ENCODE measurements at regions of chr15 and their contacts with region 1.

Region 1: GRCh38 chr15:90954712-90955671 is at the start of gene RCCD1:
- DNase-seq: peak; percentile 93
- ATAC-seq: peak; percentile 75
- H3K4me3 Mint-ChIP-seq: peak within 1 kb of the TSS; percentile 74
- H3K27ac Mint-ChIP-seq: peak within 1 kb of the TSS; percentile 76
- H3K4me1 Mint-ChIP-seq: peaks cover 16% of the 10 kb centered on the region
- H3K27me3 Mint-ChIP-seq: no peaks in the 10 kb centered on the region
- CTCF ChIP-seq: no peak
- total RNA-seq, gene RCCD1: 26.1 to 31.9 TPM (median 27.8 TPM) in 3 replicates

Region 2: GRCh38 chr15:90680371-90680935 is 274.5 kb before region 1 on chr15:
- CTCF ChIA-PET with region 1: no interaction called
- POLR2A ChIA-PET with region 1: no interaction called
- DNase-seq: no peak
- ATAC-seq: no peak
- H3K4me3 Mint-ChIP-seq: no peak overlapping the region
- H3K27ac Mint-ChIP-seq: no peak overlapping the region
- H3K4me1 Mint-ChIP-seq: 0 out of 2 replicates have a peak, but pooled peaks cover 3% of the 10 kb centered on the region
- H3K27me3 Mint-ChIP-seq: no peaks in the 10 kb centered on the region
- CTCF ChIP-seq: no peak

Region 3: GRCh38 chr15:90902040-90902839 is 52.8 kb before region 1 on chr15:
- CTCF ChIA-PET with region 1: interaction called, 49 read pairs
- POLR2A ChIA-PET with region 1: interaction called, 4 read pairs
- DNase-seq: peak; percentile 78
- ATAC-seq: peak; percentile 77
- H3K4me3 Mint-ChIP-seq: peak overlapping the region; percentile 70
- H3K27ac Mint-ChIP-seq: peak overlapping the region; percentile 41; the same call in 1 of the 2 replicates
- H3K4me1 Mint-ChIP-seq: peaks cover 23% of the 10 kb centered on the region
- H3K27me3 Mint-ChIP-seq: peaks cover 26% of the 10 kb centered on the region
- CTCF ChIP-seq: no peak

Region 4: DNA sequence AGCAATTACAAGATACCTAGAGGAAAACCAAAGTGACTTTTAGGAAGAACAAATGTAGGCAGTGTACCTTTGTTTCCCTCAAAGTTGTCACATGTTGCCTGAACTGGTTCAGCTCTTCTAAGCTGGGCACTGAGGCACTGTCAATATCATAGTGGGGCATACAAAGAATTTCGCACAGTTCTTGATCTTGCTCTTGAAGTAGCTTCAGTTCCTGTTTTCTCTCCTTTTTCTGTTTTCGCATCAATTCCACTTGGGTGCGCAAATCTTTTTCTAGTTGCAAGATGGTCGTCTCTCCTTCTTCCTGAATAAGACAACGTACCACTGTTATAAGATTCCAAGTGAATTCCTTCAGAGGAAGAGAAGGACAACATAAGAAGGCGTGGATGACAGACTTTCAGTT is 26.7 kb after region 1 on chr15:
- CTCF ChIA-PET with region 1: interaction called, 26 read pairs
- POLR2A ChIA-PET with region 1: interaction called, 3 read pairs
- DNase-seq: no peak
- ATAC-seq: no peak
- H3K4me3 Mint-ChIP-seq: no peak overlapping the region
- H3K27ac Mint-ChIP-seq: no peak overlapping the region
- H3K4me1 Mint-ChIP-seq: no peaks in the 10 kb centered on the region
- H3K27me3 Mint-ChIP-seq: no peaks in the 10 kb centered on the region
- CTCF ChIP-seq: no peak

Region 5: GRCh38 chr15:90994417-90995311 is 39.7 kb after region 1 on chr15 and contains the start of gene PRC1:
- CTCF ChIA-PET with region 1: interaction called, 31 read pairs
- POLR2A ChIA-PET with region 1: interaction called, 4 read pairs
- DNase-seq: peak; percentile 99
- ATAC-seq: peak; percentile 97
- H3K4me3 Mint-ChIP-seq: peak within 1 kb of the TSS; percentile 99
- H3K27ac Mint-ChIP-seq: peak within 1 kb of the TSS; percentile 99
- H3K4me1 Mint-ChIP-seq: peaks cover 23% of the 10 kb centered on the region
- H3K27me3 Mint-ChIP-seq: no peaks in the 10 kb centered on the region
- CTCF ChIP-seq: no peak
- total RNA-seq, gene PRC1: 114 to 130 TPM (median 121 TPM) in 3 replicates

Region 6: DNA sequence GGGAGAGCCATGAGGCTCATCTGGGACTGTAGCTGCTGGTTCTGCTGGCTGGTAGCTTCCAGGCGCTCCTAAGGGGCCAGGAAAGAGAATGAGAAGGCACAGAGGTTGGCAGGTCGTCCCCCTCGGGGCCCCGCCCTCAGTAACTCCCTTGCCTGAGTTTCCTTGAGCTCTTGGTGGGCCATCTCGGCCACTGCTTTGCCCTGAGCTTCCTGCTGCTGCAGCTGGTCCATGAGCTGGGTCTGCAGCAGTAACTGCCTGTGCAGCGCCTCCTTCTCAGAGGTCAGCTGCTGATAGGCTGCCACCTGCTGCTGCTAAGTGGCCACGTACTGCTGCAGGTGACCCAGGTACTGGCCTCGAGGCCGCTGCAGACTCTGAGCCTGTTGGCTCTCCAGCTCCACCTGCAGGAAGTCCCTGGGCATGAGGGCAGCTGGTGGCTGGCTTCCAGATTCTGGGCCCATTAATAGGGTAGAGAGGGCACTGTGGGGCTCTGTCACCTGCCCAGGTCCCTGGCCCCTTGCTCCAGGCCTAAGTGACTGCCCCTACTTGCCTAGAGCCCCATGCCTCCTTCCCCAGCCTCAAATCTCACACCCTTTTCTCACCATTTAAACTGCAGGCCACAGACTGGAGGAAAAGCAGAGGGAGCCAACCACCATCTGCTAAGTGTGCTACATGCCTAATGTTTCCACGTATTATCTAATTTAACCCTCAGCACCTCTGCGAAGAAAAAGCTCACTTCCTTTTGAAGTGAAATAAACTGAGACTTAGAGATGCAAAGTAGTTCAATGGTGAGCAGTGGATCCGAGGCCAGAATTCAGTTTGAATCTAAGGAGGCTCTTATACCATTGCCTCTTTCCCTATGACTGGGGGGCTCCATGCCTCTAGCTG is 78.2 kb after region 1 on chr15:
- CTCF ChIA-PET with region 1: interaction called, 116 read pairs
- POLR2A ChIA-PET with region 1: interaction called, 4 read pairs
- DNase-seq: peak; percentile 92
- ATAC-seq: peak; percentile 94
- H3K4me3 Mint-ChIP-seq: peak overlapping the region; percentile 36
- H3K27ac Mint-ChIP-seq: peak overlapping the region; percentile 53; the same call in 1 of the 2 replicates
- H3K4me1 Mint-ChIP-seq: peaks cover 6% of the 10 kb centered on the region
- H3K27me3 Mint-ChIP-seq: peaks cover 11% of the 10 kb centered on the region
- CTCF ChIP-seq: peak; percentile 65

Region 7: GRCh38 chr15:91055548-91056331 is 100.7 kb after region 1 on chr15:
- CTCF ChIA-PET with region 1: interaction called, 16 read pairs
- POLR2A ChIA-PET with region 1: no interaction called
- DNase-seq: peak; percentile 74
- ATAC-seq: peak; percentile 98
- H3K4me3 Mint-ChIP-seq: peak overlapping the region; percentile 16; the same call in 1 of the 2 replicates
- H3K27ac Mint-ChIP-seq: no peak overlapping the region
- H3K4me1 Mint-ChIP-seq: peaks cover 2% of the 10 kb centered on the region; the same call in 1 of the 2 replicates
- H3K27me3 Mint-ChIP-seq: peaks cover 8% of the 10 kb centered on the region
- CTCF ChIP-seq: peak; percentile 46; the same call in 1 of the 2 replicates

Region 8: DNA sequence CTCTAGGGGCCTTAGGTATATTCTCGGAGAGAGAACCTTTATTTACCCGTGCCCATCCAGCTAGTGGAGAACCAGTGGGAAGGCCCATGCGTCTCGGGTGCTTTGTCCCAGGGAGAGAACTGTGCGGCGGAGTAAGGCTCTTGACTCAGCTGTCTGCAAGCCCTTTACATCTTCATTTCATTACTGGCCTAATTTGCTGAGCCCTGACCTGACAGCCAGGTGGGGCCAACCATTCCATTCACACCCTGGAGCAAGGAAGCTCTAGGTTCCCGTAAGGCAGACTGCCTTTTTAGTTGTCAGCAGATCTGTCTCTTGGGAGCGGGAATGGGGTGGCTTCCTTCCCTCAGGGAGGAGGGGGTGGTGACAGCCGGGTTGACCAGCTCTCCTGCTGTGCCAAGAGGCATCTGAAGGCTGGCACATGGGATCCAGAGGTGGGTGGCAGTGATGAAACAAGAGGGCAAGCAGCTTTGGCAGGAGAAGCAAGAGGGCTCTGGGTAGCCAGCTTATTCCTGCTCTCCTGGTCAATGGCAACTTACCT is 181.5 kb after region 1 on chr15:
- CTCF ChIA-PET with region 1: no interaction called
- POLR2A ChIA-PET with region 1: no interaction called
- DNase-seq: no peak
- ATAC-seq: no peak
- H3K4me3 Mint-ChIP-seq: no peak overlapping the region
- H3K27ac Mint-ChIP-seq: no peak overlapping the region
- H3K4me1 Mint-ChIP-seq: peaks cover 8% of the 10 kb centered on the region
- H3K27me3 Mint-ChIP-seq: no peaks in the 10 kb centered on the region
- CTCF ChIP-seq: no peak

Region 9: DNA sequence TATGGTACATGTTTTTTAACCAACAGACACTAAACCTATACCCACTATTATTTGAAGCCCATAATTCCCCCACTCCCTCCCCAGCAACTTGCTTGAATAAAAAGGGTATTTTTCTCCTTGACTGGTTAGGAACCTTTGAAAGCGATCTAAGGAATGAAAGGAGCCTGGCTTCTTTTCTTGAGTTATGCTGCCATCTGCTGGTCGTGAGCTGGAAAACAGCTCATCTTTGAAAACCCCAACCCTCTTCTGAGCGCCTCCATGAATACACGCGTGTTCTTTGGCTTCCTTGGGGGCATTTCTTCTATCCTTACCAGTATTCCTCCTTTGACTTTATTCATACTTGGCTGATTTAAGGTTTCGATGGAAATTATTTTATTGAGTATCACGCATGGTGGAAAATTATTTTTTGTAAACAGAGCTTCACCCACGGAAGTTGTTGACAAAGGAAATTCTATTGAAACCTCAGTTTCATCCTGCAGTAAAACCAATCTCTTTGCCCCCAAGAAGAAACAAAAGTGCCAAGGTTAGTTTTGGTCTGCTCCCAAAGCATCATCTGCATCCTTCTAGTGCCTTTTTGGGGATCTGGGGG is 316.7 kb after region 1 on chr15:
- CTCF ChIA-PET with region 1: interaction called, 51 read pairs
- POLR2A ChIA-PET with region 1: no interaction called
- DNase-seq: peak; percentile 64
- ATAC-seq: peak; percentile 67; the same call in 1 of the 2 replicates
- H3K4me3 Mint-ChIP-seq: no peak overlapping the region
- H3K27ac Mint-ChIP-seq: no peak overlapping the region
- H3K4me1 Mint-ChIP-seq: no peaks in the 10 kb centered on the region
- H3K27me3 Mint-ChIP-seq: peaks cover 13% of the 10 kb centered on the region
- CTCF ChIP-seq: peak; percentile 69

Measured in WTC11 (cell line).